WTC11 (cell line): ENCODE measurements at regions of chr9 and their contacts with region 1.

Region 1: GRCh38 chr9:92706216-92706940 is 36.4 kb upstream of the IPPK start:
- DNase-seq: peak; percentile 76
- ATAC-seq: peak; percentile 100
- H3K4me3 Mint-ChIP-seq: no peak overlapping the region
- H3K27ac Mint-ChIP-seq: peak overlapping the region; percentile 75
- H3K4me1 Mint-ChIP-seq: no peaks in the 10 kb centered on the region
- H3K27me3 Mint-ChIP-seq: no peaks in the 10 kb centered on the region
- CTCF ChIP-seq: no peak

Region 2: GRCh38 chr9:92564504-92564903 is 141.9 kb before region 1 on chr9:
- CTCF ChIA-PET with region 1: no interaction called
- POLR2A ChIA-PET with region 1: no interaction called
- DNase-seq: no peak
- ATAC-seq: no peak
- H3K4me3 Mint-ChIP-seq: no peak overlapping the region
- H3K27ac Mint-ChIP-seq: no peak overlapping the region
- H3K4me1 Mint-ChIP-seq: peaks cover 4% of the 10 kb centered on the region
- H3K27me3 Mint-ChIP-seq: no peaks in the 10 kb centered on the region; the same call in 1 of the 2 replicates
- CTCF ChIP-seq: no peak

Region 3: DNA sequence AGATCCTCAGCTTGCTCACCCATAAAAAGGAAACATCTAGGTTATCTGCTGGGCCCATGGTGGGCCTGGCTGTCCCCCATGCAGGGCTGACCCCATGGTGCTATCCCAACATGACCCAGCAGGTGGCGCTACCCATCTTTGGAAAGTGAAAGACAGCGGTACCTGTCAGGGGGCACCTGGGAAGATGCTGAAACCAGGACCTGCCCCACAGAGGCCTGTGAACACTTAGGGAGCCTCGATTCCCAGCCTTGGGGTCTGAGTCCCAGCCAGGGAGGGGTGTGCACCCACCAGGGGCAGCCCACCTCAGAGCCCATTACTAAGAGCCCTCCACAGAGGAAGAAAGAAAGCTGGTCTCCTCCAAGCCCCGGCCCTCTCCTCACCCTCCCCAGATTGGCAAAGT is 10.2 kb after region 1 on chr9:
- CTCF ChIA-PET with region 1: interaction called, 16 read pairs
- POLR2A ChIA-PET with region 1: no interaction called
- DNase-seq: peak; percentile 97
- ATAC-seq: peak; percentile 91
- H3K4me3 Mint-ChIP-seq: no peak overlapping the region
- H3K27ac Mint-ChIP-seq: no peak overlapping the region
- H3K4me1 Mint-ChIP-seq: no peaks in the 10 kb centered on the region
- H3K27me3 Mint-ChIP-seq: no peaks in the 10 kb centered on the region
- CTCF ChIP-seq: peak; percentile 96